ENCODE measurements at regions of chr10 and their contacts with region 1.

Region 1: DNA sequence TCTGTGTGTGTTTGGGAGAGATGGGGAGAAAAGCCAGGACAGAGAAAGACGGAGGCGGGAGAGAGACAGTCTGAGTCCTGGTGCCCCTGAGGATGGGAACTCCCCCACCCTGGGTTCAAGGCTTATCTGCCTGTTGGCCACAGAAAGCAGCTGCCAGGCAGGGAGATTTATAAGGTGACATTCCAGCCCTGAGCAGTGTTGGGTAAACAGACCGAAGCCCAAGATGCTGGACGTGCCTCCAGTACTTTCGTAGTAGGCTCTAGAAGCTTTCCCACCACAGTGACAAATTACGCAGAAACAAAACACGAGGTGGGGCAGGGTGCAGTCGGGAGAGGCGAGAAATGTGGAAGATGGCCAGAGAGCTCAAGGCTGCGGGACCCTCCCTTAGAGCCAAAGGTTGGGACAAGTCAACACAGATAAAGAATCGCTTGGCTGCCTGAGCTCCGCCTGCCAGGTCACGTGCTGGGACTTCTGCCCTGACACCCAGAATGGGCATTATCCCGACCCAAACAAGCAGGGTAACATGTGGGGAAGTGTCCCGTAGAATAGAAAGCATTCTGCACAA is 41.1 kb downstream of the CCDC3 start:
- DNase-seq: peak in 1 of 2 donors; percentile 17
- ATAC-seq: peak; percentile 51 to 60
- H3K4me3 ChIP-seq: no peak overlapping the region
- H3K27ac ChIP-seq: peak overlapping the region; percentile 45 to 75 (median 60)
- H3K4me1 ChIP-seq: no peaks in the 10 kb centered on the region
- H3K27me3 ChIP-seq: no peaks in the 10 kb centered on the region
- CTCF ChIP-seq: no peak
- POLR2A ChIP-seq: no peak

Region 2: GRCh38 chr10:12750525-12751201 is 209.8 kb before region 1 on chr10:
- in situ Hi-C with region 1: no loop called
- intact Hi-C with region 1: loop called (anchors 5 kb)
- DNase-seq: peak; percentile 29 to 64
- ATAC-seq: peak; percentile 49 to 55
- H3K4me3 ChIP-seq: no peak overlapping the region
- H3K27ac ChIP-seq: peak overlapping the region; percentile 73 to 88 (median 76)
- H3K4me1 ChIP-seq: peaks cover 5 to 11% of the 10 kb centered on the region in 2 donors
- H3K27me3 ChIP-seq: no peaks in the 10 kb centered on the region
- CTCF ChIP-seq: peak in 1 of 5 experiments; percentile 7
- POLR2A ChIP-seq: no peak